Mammary epithelial cell (primary cell): ENCODE measurements at regions of chr5 and their contacts with region 1.

Region 1: GRCh38 chr5:60586307-60586901 is 113.6 kb downstream of the DEPDC1B start:
- DNase-seq: no peak
- H3K4me3 ChIP-seq: no peak overlapping the region
- H3K27ac ChIP-seq: no peak overlapping the region
- H3K4me1 ChIP-seq: no peaks in the 10 kb centered on the region
- H3K27me3 ChIP-seq: no peaks in the 10 kb centered on the region
- CTCF ChIP-seq: peak; percentile 14 to 50

Region 2: GRCh38 chr5:60382716-60383115 is 203.7 kb before region 1 on chr5:
- CTCF ChIA-PET with region 1: no interaction called
- dilution Hi-C with region 1: no loop called
- in situ Hi-C with region 1: no loop called
- intact Hi-C with region 1: loop called (anchors 1 kb)
- DNase-seq: peak; percentile 29
- H3K4me3 ChIP-seq: no peak overlapping the region
- H3K27ac ChIP-seq: no peak overlapping the region
- H3K4me1 ChIP-seq: no peaks in the 10 kb centered on the region
- H3K27me3 ChIP-seq: peaks cover 3% of the 10 kb centered on the region
- CTCF ChIP-seq: peak; percentile 31 to 57